ENCODE measurements at regions of chr7 and their contacts with region 1.

Region 1: GRCh38 chr7:25820432-25821040 is 331.5 kb upstream of the NFE2L3 start:
- H3K4me3 ChIP-seq: no peak overlapping the region
- H3K27ac ChIP-seq: no peak overlapping the region
- H3K4me1 ChIP-seq: no peaks in the 10 kb centered on the region
- CTCF ChIP-seq: no peak

Region 2: GRCh38 chr7:25805027-25805687 is 15.4 kb before region 1 on chr7:
- CTCF ChIA-PET with region 1: interaction called, 10 read pairs
- POLR2A ChIA-PET with region 1: no interaction called
- H3K4me3 ChIP-seq: no peak overlapping the region
- H3K27ac ChIP-seq: no peak overlapping the region; the same call in 1 of the 2 replicates
- H3K4me1 ChIP-seq: peaks cover 9% of the 10 kb centered on the region
- CTCF ChIP-seq: no peak

Region 3: DNA sequence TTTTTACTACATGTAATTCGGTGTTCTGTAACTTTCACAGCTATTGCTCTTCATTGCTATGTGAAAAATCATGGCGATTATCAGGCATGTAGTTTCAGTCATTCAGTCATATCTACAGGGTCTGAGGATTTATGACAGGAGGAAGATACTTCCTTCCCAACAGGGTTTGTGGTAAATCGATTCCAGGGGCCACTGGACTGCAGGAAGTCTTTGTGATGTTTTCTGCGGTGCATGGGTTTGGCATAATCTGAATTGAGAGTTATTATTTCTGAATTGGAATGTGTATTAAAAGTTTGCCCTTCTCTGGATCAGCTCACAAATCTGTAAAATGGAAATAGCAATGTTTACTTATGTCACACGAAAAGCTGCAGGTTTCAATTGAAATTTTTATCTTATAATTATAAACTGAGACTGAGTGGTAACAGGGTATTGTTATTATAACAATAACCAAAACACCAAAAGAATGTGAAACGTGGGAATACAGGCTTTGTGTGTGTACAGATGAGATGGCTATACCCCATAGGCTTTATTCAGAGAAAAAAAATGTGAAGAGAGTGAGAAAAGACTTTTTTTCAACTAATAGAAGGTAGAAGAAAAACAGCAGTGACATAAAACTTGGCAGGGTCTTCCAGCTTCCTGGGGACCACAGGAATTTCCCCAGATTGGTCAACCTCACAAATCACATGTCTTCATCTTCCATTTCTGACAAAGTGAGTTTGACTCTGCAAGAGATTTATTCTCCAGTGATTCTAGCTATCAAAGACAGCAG is 23.8 kb after region 1 on chr7:
- CTCF ChIA-PET with region 1: interaction called, 14 read pairs
- POLR2A ChIA-PET with region 1: no interaction called
- H3K4me3 ChIP-seq: no peak overlapping the region
- H3K27ac ChIP-seq: no peak overlapping the region
- H3K4me1 ChIP-seq: peaks cover 19% of the 10 kb centered on the region
- CTCF ChIP-seq: no peak

Region 4: DNA sequence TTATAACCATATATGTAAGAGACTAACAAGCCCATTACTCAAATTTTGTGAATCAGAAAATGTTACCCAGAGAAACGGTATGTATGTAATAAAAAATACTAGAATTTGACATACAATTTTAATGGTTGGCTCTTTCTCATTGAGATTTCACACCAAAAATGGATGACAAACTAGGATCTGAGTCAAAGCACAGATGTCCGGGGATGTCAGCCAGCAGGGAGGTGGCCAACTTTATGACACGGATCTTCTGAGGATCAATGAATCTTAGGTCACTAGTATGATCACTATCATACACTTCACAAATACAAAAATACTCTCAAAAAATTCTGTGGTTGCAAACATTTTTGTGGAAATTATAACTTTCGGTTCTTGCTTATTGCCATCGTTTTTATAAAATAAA is 157.9 kb after region 1 on chr7:
- CTCF ChIA-PET with region 1: no interaction called
- POLR2A ChIA-PET with region 1: no interaction called
- H3K4me3 ChIP-seq: no peak overlapping the region
- H3K27ac ChIP-seq: no peak overlapping the region
- H3K4me1 ChIP-seq: no peaks in the 10 kb centered on the region
- CTCF ChIP-seq: no peak

Measured in HEK293 (cell line).